ENCODE measurements at regions of chrX and their contacts with region 1.

Region 1: DNA sequence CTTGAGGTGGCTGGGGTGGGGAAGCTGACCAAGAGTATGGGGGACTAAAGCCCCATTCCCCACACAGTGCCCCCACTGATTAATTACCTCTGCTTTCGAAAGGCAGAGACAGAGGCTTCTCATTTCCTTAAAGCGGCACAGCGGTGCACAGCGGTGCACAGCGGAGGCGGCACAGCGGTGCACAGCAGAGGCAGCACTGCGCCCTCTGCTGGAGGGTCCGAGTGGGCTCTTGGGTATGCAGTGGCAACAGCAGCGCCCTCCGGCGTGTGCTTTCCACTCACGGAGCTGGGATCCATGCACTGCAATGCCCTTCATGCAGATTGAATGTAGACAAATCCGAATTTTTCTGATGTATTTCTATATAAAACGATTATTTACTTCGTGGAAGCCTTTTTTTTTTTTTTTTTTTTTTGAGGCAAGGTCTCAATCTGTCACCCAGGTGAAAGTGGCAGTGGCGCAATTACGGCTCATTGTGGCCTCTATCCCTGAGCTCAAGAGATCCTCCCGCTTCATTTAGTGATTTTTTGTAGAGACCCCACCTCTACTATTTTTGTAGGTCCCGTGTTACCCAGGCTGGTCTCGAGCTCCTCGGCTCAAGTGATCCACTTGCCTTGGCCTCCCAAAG is 19.7 kb upstream of the PRPS2 start:
- DNase-seq: peak; percentile 20
- ATAC-seq: peak; percentile 100
- H3K4me3 ChIP-seq: no peak overlapping the region
- H3K27ac ChIP-seq: no peak overlapping the region
- H3K4me1 ChIP-seq: no peaks in the 10 kb centered on the region
- H3K27me3 ChIP-seq: peaks cover 0 to 8% of the 10 kb centered on the region in 2 experiments; a peak in 2 of 4 replicates
- CTCF ChIP-seq: peak; percentile 94 to 97 (median 94)
- EP300 ChIP-seq: no peak
- POLR2A ChIP-seq: no peak
- RAD21 ChIP-seq: peak; percentile 46; the same call in 1 of the 2 replicates

Region 2: DNA sequence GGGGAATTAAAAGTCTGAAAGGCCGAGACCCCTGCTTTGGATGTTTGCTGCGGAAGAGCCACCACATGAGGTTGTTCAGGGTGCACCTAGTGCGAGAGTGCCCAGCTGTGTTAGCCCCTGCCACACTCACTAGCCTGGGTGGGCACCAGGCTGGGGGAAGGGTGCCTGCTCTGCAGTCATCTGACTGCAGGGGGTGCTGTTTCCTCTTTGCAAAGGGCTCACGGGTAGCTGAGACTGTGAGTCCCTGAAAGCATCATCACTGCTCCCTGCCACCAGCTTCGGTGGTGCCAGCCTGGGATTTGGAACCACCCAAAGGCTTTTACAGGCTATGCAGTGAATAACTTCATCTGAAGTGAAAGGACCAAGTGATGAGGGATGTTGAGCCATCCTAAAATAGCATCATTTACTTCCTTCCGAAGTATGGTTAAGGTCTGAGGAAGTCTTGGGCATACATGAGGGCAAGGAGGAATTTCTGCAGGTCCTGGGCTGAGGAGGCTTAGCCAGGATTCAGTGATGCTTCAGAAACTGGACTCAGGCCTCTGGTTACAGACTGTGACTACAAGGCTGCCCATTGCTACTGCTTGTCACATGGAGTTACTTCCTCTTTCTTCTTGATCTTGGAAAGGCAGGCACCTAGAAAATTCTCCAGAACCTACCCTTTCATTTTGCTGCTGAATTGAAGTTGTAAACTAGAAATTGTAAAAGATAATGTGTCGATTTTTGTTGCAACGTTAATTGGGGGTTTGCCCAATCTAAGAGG is 273.5 kb before region 1 on chrX:
- CTCF ChIA-PET with region 1: interaction called, 3 read pairs
- POLR2A ChIA-PET with region 1: no interaction called
- RAD21 ChIA-PET with region 1: no interaction called
- SMC1A ChIA-PET with region 1: no interaction called
- in situ Hi-C with region 1: no loop called
- intact Hi-C with region 1: loop called (anchors 2 kb)
- DNase-seq: no peak
- ATAC-seq: peak; percentile 93
- H3K4me3 ChIP-seq: no peak overlapping the region
- H3K27ac ChIP-seq: no peak overlapping the region
- H3K4me1 ChIP-seq: no peaks in the 10 kb centered on the region; the same call in 1 of the 2 replicates
- H3K27me3 ChIP-seq: no peaks in the 10 kb centered on the region
- CTCF ChIP-seq: peak; percentile 56 to 76 (median 69)
- EP300 ChIP-seq: no peak
- POLR2A ChIP-seq: no peak
- RAD21 ChIP-seq: peak; percentile 54

Region 3: DNA sequence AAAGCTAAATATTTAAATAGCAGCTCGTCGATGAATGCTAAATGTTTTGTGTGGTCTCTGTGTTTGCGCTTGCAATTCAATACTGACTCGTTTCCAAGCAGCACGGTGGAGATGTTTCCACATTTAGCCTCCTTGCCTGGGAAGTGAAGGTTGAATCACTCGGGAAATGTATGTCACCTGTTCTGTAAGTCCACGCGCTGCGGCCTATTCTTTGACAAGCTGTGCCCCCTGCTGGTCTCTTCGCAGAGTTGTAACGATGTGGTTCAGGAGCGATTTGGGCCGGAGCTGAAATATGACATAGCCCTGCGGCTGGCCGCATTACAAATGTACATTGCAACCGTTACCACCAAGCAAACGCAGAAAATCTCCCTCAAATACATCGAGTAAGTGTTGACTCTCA is 69.9 kb before region 1 on chrX:
- CTCF ChIA-PET with region 1: interaction called, 24 read pairs
- POLR2A ChIA-PET with region 1: no interaction called
- RAD21 ChIA-PET with region 1: no interaction called
- SMC1A ChIA-PET with region 1: interaction called, 4 read pairs
- in situ Hi-C with region 1: no loop called
- intact Hi-C with region 1: loop called (anchors 5 kb)
- DNase-seq: peak; percentile 12
- ATAC-seq: peak; percentile 98
- H3K4me3 ChIP-seq: no peak overlapping the region
- H3K27ac ChIP-seq: no peak overlapping the region
- H3K4me1 ChIP-seq: no peaks in the 10 kb centered on the region
- H3K27me3 ChIP-seq: no peaks in the 10 kb centered on the region
- CTCF ChIP-seq: peak; percentile 70 to 84 (median 71)
- EP300 ChIP-seq: no peak
- POLR2A ChIP-seq: no peak
- RAD21 ChIP-seq: peak; percentile 86

Region 4: GRCh38 chrX:12791257-12792228 is 20.0 kb after region 1 on chrX and contains the start of gene PRPS2:
- CTCF ChIA-PET with region 1: interaction called, 16 read pairs
- POLR2A ChIA-PET with region 1: interaction called, 4 read pairs
- RAD21 ChIA-PET with region 1: interaction called, 5 read pairs
- SMC1A ChIA-PET with region 1: interaction called, 7 read pairs
- in situ Hi-C with region 1: no loop called
- intact Hi-C with region 1: no loop called
- DNase-seq: no peak
- ATAC-seq: peak; percentile 88
- H3K4me3 ChIP-seq: peak within 1 kb of the TSS; percentile 75
- H3K27ac ChIP-seq: peak within 1 kb of the TSS; percentile 58
- H3K4me1 ChIP-seq: no peaks in the 10 kb centered on the region
- H3K27me3 ChIP-seq: no peaks in the 10 kb centered on the region
- CTCF ChIP-seq: no peak
- EP300 ChIP-seq: no peak
- POLR2A ChIP-seq: peak; percentile 87
- RAD21 ChIP-seq: no peak
- polyA plus RNA-seq, gene PRPS2: 44.1 to 56.3 TPM

Region 5: GRCh38 chrX:12843668-12844279 is 72.2 kb after region 1 on chrX:
- CTCF ChIA-PET with region 1: no interaction called
- POLR2A ChIA-PET with region 1: no interaction called
- RAD21 ChIA-PET with region 1: no interaction called
- SMC1A ChIA-PET with region 1: no interaction called
- in situ Hi-C with region 1: no loop called
- intact Hi-C with region 1: no loop called
- DNase-seq: peak; percentile 85
- ATAC-seq: peak; percentile 92
- H3K4me3 ChIP-seq: peak overlapping the region; percentile 42; the same call in 1 of the 2 replicates
- H3K27ac ChIP-seq: peak overlapping the region; percentile 100
- H3K4me1 ChIP-seq: peaks cover 29% of the 10 kb centered on the region
- H3K27me3 ChIP-seq: no peaks in the 10 kb centered on the region
- CTCF ChIP-seq: no peak
- EP300 ChIP-seq: peak in 1 of 2 experiments; percentile 57; a peak in 1 of 4 replicates
- POLR2A ChIP-seq: no peak
- RAD21 ChIP-seq: no peak

Region 6: DNA sequence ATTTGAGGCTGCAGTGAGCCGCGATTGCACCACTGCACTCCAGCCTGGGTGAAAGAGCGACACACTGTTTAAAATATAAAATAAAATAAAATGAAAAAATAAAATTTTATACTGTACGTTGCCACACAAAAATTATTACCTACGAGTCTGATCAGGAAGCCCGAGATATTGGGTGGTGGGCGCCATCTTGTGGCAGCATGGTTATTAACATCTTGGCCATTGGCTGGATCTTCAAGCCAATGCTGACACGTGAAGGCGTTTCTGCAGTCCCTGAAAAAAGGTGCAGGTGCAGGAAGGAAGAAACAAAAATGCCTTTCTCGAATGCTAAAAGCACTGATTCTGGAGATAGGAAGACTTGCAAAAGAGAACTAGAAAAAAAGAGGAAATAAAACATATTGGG is 129.9 kb after region 1 on chrX:
- CTCF ChIA-PET with region 1: interaction called, 11 read pairs
- POLR2A ChIA-PET with region 1: no interaction called
- RAD21 ChIA-PET with region 1: interaction called, 6 read pairs
- SMC1A ChIA-PET with region 1: interaction called, 5 read pairs
- in situ Hi-C with region 1: no loop called
- intact Hi-C with region 1: loop called (anchors 1 kb)
- DNase-seq: no peak
- ATAC-seq: peak; percentile 93
- H3K4me3 ChIP-seq: no peak overlapping the region
- H3K27ac ChIP-seq: no peak overlapping the region
- H3K4me1 ChIP-seq: no peaks in the 10 kb centered on the region
- H3K27me3 ChIP-seq: no peaks in the 10 kb centered on the region
- CTCF ChIP-seq: peak; percentile 68 to 84 (median 75)
- EP300 ChIP-seq: no peak
- POLR2A ChIP-seq: no peak
- RAD21 ChIP-seq: peak; percentile 80

Region 7: GRCh38 chrX:12919051-12919450 is 147.5 kb after region 1 on chrX:
- CTCF ChIA-PET with region 1: no interaction called
- POLR2A ChIA-PET with region 1: no interaction called
- RAD21 ChIA-PET with region 1: no interaction called
- SMC1A ChIA-PET with region 1: no interaction called
- in situ Hi-C with region 1: no loop called
- intact Hi-C with region 1: no loop called
- DNase-seq: no peak
- ATAC-seq: no peak
- H3K4me3 ChIP-seq: no peak overlapping the region
- H3K27ac ChIP-seq: no peak overlapping the region
- H3K4me1 ChIP-seq: no peaks in the 10 kb centered on the region
- H3K27me3 ChIP-seq: no peaks in the 10 kb centered on the region; a peak in 1 of 4 replicates
- CTCF ChIP-seq: no peak
- EP300 ChIP-seq: no peak
- POLR2A ChIP-seq: no peak
- RAD21 ChIP-seq: no peak

Measured in GM12878 (cell line).